Endothelial cell of umbilical vein (primary cell): ENCODE measurements at regions of chr17 and their contacts with region 1.

Region 1: DNA sequence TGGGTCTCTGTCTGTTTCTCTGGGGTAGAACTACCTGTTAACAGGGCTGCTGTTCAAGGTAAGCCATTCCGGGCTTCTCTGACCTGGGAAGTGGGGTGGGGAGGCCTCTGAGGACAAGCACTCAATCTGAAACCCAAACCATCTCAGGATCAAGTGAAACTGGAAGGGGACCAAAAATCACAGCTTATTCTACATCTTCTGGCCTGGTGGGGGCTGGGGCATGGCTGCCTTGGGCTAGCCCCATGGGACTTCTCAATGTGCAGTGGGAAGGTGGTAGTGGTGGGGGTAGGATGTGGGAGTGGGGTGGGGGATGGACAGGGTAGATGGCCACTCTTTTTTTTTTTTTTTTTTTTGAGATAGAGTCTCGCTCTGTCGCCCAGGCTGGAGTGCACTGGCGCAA is 5.5 kb downstream of the FLOT2 start:
- DNase-seq: no peak
- H3K4me3 ChIP-seq: no peak overlapping the region
- H3K27ac ChIP-seq: no peak overlapping the region
- H3K4me1 ChIP-seq: peaks cover 51% of the 10 kb centered on the region
- H3K27me3 ChIP-seq: no peaks in the 10 kb centered on the region
- CTCF ChIP-seq: no peak
- POLR2A ChIP-seq: no peak

Region 2: DNA sequence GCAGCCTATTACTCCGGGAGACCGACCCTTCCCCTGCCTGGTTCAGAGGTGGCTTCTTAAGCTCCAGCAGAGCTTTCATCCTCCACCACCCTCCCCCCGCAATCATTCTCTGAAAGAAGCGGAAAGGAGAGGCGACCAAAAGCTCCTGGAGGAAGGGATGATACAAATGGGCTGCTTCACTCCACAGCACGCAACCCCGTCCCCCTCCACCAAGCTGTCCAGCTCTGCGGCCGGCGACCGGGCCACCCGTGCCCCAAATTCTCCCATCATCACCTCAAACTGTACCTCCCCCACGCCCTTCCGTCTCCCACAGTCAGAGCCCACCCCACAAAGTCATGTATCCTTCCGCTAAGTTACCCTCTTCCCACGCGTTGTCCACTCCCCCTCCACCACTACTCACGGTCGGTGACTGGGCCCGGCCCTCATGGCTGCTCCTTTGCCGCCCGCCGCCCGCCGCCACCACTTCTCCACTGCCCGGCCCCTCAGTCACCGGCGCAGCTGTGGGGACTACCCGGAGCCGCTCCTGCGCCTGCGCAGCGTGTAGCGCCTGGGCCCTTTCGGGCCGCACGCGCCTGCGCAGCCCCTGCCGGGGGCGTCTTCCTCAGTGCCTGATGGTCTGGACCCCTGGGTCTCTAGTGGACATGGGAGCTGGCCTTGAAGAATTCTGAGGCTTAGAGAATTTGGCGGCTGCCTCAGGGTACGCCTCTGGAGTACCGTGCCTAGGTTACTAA is 49.6 kb before region 1 on chr17 and contains the start of gene FAM222B:
- CTCF ChIA-PET with region 1: interaction called, 4 read pairs
- POLR2A ChIA-PET with region 1: interaction called, 10 read pairs
- dilution Hi-C with region 1: no loop called
- intact Hi-C with region 1: no loop called
- DNase-seq: peak; percentile 87
- H3K4me3 ChIP-seq: peak within 1 kb of the TSS; percentile 38 to 70 (median 65)
- H3K27ac ChIP-seq: peak within 1 kb of the TSS; percentile 54
- H3K4me1 ChIP-seq: peaks cover 19% of the 10 kb centered on the region
- H3K27me3 ChIP-seq: no peaks in the 10 kb centered on the region
- CTCF ChIP-seq: no peak
- POLR2A ChIP-seq: peak; percentile 72
- total RNA-seq, gene FAM222B: 30.6 and 33.7 TPM in 2 replicates

Region 3: DNA sequence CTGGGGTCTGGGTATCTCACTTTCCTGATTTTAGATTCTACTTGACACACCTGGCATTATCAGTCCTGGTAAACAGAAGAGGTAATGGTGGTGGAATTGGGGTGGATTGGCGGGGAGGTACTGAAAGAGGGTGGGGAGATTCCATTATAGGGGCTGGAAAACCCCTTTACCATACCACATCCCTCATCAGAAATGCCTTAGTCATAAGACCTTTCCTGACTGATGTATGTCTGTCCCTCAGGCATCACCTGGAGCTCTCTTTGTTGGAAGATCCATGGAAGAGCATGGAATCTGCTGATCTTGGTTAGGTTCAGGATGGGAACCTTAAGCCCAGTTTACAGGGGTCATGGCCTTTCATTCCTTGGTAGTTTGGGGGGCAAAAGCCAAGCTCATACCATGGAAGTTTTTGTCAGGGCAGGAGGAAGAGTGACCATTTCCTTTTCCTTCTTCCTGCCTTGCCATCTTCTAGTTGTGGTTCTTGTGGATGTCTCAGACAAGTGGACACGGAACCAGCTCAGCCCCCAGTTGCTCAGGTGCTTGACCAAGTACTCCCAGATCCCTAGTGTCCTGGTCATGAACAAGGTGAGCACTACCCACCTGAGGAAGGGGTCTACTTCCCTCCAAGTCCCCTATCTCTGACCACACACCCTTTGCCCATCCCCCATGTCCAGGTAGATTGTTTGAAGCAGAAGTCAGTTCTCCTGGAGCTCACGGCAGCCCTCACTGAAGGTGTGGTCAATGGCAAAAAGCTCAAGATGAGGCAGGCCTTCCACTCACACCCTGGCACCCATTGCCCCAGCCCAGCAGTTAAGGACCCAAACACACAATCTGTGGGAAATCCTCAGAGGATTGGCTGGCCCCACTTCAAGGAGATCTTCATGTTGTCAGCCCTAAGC is 33.9 kb before region 1 on chr17:
- CTCF ChIA-PET with region 1: no interaction called
- POLR2A ChIA-PET with region 1: no interaction called
- dilution Hi-C with region 1: no loop called
- intact Hi-C with region 1: no loop called
- DNase-seq: no peak
- H3K4me3 ChIP-seq: no peak overlapping the region
- H3K27ac ChIP-seq: no peak overlapping the region
- H3K4me1 ChIP-seq: peaks cover 12% of the 10 kb centered on the region
- H3K27me3 ChIP-seq: no peaks in the 10 kb centered on the region
- CTCF ChIP-seq: no peak
- POLR2A ChIP-seq: no peak

Region 4: DNA sequence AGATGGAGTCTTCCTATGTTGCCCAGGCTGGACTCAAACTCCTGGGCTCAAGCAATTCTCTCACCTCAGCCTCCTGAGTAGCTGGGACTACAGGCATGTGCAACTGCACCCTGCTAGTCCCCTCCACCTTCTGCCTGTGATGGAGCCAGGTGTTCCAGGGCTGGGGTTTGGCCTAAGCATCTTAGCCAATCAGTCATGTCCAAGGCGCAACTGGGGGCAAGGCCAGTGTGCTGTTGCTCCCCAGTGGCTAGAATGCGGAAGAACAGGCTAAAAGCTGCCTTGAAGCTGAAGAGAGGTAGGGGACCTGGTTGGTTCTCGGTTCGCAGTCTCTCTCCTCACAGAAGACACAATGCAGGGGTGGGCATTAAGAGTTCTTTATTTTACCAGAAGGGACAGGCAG is 13.0 kb before region 1 on chr17:
- CTCF ChIA-PET with region 1: interaction called, 11 read pairs
- POLR2A ChIA-PET with region 1: no interaction called
- dilution Hi-C with region 1: no loop called
- intact Hi-C with region 1: loop called (anchors 2 kb)
- DNase-seq: peak; percentile 33
- H3K4me3 ChIP-seq: no peak overlapping the region
- H3K27ac ChIP-seq: no peak overlapping the region
- H3K4me1 ChIP-seq: no peaks in the 10 kb centered on the region
- H3K27me3 ChIP-seq: no peaks in the 10 kb centered on the region
- CTCF ChIP-seq: peak; percentile 10 to 47
- POLR2A ChIP-seq: no peak

Region 5: GRCh38 chr17:29225396-29225795 is 333.4 kb after region 1 on chr17:
- CTCF ChIA-PET with region 1: no interaction called
- POLR2A ChIA-PET with region 1: no interaction called
- dilution Hi-C with region 1: no loop called
- intact Hi-C with region 1: no loop called
- DNase-seq: no peak
- H3K4me3 ChIP-seq: no peak overlapping the region
- H3K27ac ChIP-seq: no peak overlapping the region
- H3K4me1 ChIP-seq: no peaks in the 10 kb centered on the region
- H3K27me3 ChIP-seq: no peaks in the 10 kb centered on the region
- CTCF ChIP-seq: no peak
- POLR2A ChIP-seq: no peak